ENCODE measurements at regions of chr13 and their contacts with region 1.

Region 1: GRCh38 chr13:25574437-25575411 is 202.9 kb downstream of the ATP8A2 start:
- DNase-seq: peak; percentile 91
- H3K4me3 ChIP-seq: no peak overlapping the region
- H3K27ac ChIP-seq: no peak overlapping the region
- H3K4me1 ChIP-seq: peaks cover 2% of the 10 kb centered on the region
- H3K27me3 ChIP-seq: no peaks in the 10 kb centered on the region
- CTCF ChIP-seq: peak; percentile 93

Region 2: DNA sequence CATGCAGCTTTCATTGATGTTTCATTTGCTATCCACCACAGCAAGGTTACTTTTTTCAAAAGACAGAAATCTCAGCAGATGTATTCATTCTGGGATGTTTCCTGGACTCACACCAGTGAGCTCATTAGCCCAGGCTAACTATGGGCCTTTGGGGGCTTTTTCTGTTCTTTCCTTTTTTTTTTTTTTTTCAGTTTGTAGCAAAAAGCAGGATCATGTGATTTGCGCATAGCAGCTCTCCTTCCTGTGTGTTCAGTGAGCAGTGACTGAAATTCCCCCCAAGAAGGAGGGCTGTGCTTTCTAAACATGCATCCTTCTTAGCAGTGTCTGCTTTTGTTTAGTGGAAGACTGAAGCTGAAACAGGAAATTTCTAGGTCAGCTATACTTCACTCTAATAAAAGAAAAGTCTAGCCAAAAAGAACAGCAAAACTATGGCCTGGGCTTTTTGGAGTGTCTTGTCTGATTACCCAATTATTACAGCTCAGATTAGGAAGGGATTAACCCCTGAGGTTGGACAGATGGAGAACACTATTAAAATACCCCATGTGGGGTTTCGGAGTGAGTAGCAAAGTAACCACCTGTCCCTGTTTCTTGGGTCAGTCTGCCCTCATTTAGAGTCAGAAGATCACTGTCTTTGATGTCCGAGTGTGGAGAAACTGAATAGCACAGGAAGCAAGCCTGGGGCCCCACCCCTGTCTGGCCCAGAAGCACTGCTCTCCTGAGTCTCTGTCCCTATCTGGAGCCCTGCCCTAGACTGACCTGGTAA is 393.8 kb before region 1 on chr13:
- CTCF ChIA-PET with region 1: no interaction called
- POLR2A ChIA-PET with region 1: no interaction called
- intact Hi-C with region 1: no loop called
- DNase-seq: peak; percentile 63
- H3K4me3 ChIP-seq: no peak overlapping the region
- H3K27ac ChIP-seq: peak overlapping the region; percentile 72
- H3K4me1 ChIP-seq: peaks cover 40% of the 10 kb centered on the region
- H3K27me3 ChIP-seq: no peaks in the 10 kb centered on the region
- CTCF ChIP-seq: no peak

Region 3: DNA sequence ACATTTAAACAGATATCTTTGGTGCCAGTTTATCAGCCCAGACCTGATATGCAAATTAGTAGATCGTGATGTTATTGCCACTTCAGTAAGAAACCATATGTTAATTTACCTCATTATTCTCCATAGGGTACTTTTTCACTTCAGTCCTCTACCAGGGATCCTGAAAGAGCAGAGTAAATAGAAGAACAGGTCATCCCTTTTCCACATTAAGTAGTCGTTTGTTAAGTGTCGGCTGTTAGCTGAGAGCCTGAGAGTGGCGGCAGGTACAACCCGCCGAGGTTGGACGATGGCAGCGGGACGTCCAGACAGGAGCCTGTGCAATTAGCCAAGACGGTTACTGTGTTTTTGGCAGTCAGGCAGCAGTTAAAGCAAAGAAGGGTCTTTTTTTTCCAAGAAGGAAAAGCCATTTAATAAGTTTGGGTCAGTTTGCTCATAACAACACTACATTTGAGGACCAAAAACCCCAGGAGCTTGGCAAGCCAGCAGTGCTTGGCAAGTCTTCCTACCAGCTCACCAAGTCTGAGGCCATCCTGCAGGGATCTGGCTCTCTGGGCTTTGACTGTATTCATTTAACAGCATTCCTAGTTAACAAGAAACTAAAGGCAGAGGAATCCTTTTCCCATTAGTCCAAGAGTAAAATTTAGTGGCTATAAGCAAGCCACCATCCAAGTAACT is 245.3 kb after region 1 on chr13:
- CTCF ChIA-PET with region 1: no interaction called
- POLR2A ChIA-PET with region 1: no interaction called
- intact Hi-C with region 1: loop called (anchors 5 kb)
- DNase-seq: no peak
- H3K4me3 ChIP-seq: no peak overlapping the region
- H3K27ac ChIP-seq: no peak overlapping the region
- H3K4me1 ChIP-seq: peaks cover 12% of the 10 kb centered on the region
- H3K27me3 ChIP-seq: no peaks in the 10 kb centered on the region
- CTCF ChIP-seq: no peak

Region 4: GRCh38 chr13:26062844-26063444 is 488.2 kb after region 1 on chr13:
- CTCF ChIA-PET with region 1: interaction called, 4 read pairs
- POLR2A ChIA-PET with region 1: no interaction called
- intact Hi-C with region 1: loop called (anchors 2 kb)
- DNase-seq: peak; percentile 71
- H3K4me3 ChIP-seq: no peak overlapping the region
- H3K27ac ChIP-seq: no peak overlapping the region
- H3K4me1 ChIP-seq: no peaks in the 10 kb centered on the region
- H3K27me3 ChIP-seq: no peaks in the 10 kb centered on the region
- CTCF ChIP-seq: peak; percentile 77

Region 5: DNA sequence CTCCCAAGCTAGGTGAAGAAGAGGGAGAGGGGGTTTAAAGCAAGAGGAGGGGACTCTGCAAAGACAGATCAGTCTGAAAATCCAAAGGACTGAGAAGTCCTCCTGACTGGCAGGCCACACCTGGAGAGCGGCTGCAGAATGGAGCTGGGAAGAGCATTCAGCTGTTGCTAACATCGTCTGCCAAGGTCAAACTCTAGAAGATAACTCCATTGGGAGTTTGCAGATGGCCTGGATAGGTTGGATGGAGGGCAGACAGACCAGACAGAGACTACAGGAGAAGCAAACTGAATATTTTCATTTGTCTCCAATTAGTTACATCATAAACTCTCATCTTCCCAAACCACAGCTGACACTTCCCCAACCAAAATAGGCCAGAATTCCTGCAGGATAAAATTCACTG is 497.0 kb after region 1 on chr13:
- CTCF ChIA-PET with region 1: interaction called, 3 read pairs
- POLR2A ChIA-PET with region 1: no interaction called
- intact Hi-C with region 1: loop called (anchors 1 kb)
- DNase-seq: no peak
- H3K4me3 ChIP-seq: no peak overlapping the region
- H3K27ac ChIP-seq: no peak overlapping the region
- H3K4me1 ChIP-seq: no peaks in the 10 kb centered on the region
- H3K27me3 ChIP-seq: no peaks in the 10 kb centered on the region
- CTCF ChIP-seq: no peak

Measured in A673 (cell line).